Activated T-helper 1 cell treated with anti-CD3 and anti-CD28 coated beads, Interleukin-12 subunit alpha, Interleukin-12 subunit beta, Interleukin-2, Interleukin-4 antibody, amounts not matched to agents 30 ng/mL and 10 ng/mL and 1 ng/mL, durations not matched to agents 14 hours and 24 hours and 36 hours (primary cell): ENCODE measurements at regions of chr9 and their contacts with region 1.

Region 1: GRCh38 chr9:120755827-120756434 is 37.3 kb downstream of the FBXW2 start:
- DNase-seq: peak; percentile 53
- H3K4me3 Mint-ChIP-seq: no peak overlapping the region
- H3K27ac Mint-ChIP-seq: no peak overlapping the region
- H3K4me1 Mint-ChIP-seq: peaks cover 30% of the 10 kb centered on the region
- H3K27me3 Mint-ChIP-seq: no peaks in the 10 kb centered on the region

Region 2: DNA sequence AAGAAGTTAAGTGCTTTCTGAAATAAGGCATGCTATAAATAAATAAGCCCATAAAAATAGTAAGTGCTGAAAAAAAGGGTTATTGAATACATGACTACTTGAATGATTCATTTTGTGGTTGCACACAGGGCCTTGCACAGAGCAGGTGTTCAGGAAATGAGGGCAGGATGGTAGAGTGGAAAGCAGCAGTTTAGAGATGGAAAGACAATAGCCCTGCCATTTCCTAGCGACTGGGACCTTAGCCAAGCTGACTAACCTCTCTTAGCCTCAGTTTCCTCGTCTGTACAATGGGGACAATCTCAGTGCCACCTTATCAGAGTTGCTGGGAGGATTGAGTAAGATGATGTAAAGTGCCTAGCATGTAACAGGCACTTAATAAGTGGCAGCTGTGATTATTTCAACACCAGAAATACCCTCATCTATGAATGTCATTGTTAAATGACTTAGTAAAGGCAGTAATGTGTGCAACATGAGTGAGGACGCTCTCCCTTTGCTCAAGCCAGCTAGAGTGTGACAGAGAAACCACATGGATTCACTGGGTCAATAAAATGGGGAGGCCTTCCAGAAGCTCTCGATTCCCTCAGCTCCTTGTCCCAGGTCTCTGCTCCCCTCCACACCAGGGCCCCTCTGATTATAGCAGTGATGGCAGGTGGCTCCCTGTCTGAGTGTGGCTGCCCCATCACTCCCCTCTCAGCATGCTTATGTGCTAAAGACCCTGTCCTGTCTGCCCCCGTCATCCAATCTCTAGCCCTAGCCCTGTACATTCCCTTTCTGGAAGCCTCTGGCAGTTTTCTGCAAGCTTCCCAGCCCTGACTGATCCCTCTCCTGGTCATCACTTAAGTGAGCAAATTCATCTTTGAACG is 137.0 kb after region 1 on chr9:
- intact Hi-C with region 1: loop called (anchors 5 kb)
- DNase-seq: peak; percentile 62
- H3K4me3 Mint-ChIP-seq: peak overlapping the region; percentile 69
- H3K27ac Mint-ChIP-seq: peak overlapping the region; percentile 99
- H3K4me1 Mint-ChIP-seq: peaks cover 74% of the 10 kb centered on the region
- H3K27me3 Mint-ChIP-seq: no peaks in the 10 kb centered on the region

Region 3: GRCh38 chr9:120936011-120936763 is 180.3 kb after region 1 on chr9:
- intact Hi-C with region 1: loop called (anchors 1 kb)
- DNase-seq: peak; percentile 77
- H3K4me3 Mint-ChIP-seq: peak overlapping the region; percentile 59
- H3K27ac Mint-ChIP-seq: peak overlapping the region; percentile 90
- H3K4me1 Mint-ChIP-seq: peaks cover 58% of the 10 kb centered on the region
- H3K27me3 Mint-ChIP-seq: peaks cover 3% of the 10 kb centered on the region

Region 4: GRCh38 chr9:120980951-120981350 is 225.0 kb after region 1 on chr9:
- intact Hi-C with region 1: loop called (anchors 1 kb)
- DNase-seq: no peak
- H3K4me3 Mint-ChIP-seq: no peak overlapping the region
- H3K27ac Mint-ChIP-seq: no peak overlapping the region
- H3K4me1 Mint-ChIP-seq: peaks cover under 1% of the 10 kb centered on the region
- H3K27me3 Mint-ChIP-seq: peaks cover 18% of the 10 kb centered on the region

Region 5: DNA sequence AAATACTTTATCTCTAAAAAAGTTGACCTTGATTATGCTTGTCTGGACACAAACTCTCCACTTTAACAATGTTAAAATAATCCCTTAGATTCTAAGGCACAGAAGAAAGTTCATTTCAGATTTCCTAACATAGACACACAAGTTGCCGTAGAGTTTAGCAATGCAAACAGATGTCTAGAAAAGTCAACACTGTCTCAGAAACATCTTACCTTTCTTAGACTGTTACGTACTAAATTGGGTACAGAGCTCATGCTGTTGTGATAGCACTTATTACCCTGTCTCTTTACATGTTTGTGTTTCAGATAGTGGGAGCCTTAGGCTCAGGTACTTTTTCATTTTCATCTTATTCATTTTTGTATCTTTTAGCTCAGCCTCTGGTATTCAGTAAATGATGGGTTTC is 242.2 kb after region 1 on chr9:
- intact Hi-C with region 1: no loop called
- DNase-seq: no peak
- H3K4me3 Mint-ChIP-seq: no peak overlapping the region
- H3K27ac Mint-ChIP-seq: no peak overlapping the region
- H3K4me1 Mint-ChIP-seq: no peaks in the 10 kb centered on the region
- H3K27me3 Mint-ChIP-seq: peaks cover 4% of the 10 kb centered on the region

Region 6: DNA sequence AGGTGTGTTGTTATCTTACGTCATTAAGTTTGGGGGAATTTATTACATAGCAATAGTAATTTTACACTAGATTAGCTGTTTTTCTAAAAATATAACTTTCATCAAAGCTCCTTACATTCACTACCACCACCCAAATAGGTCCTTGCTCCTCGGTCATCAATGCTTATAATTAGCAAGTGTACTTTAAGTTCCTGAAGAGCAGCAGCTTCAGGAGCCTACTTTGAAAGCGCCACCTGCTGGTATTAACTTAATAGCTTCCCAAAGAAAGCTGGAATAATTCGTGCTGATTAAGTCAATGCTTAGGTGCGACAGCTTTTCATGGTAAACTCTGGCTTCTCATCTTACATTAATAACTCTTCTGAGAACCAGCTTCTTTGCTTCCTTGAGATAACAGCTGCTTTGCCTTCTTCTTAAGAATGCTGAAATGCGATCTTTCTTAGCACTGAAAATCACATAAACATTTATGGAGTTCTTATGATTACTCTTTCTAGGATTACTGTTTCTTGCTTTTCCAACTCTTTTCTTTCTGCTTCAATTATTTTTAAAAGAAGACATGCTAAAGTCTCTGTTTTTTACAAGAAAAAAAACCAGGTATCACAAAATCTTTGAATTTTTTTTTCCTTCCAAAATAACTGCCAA is 304.2 kb after region 1 on chr9:
- intact Hi-C with region 1: loop called (anchors 1 kb)
- DNase-seq: no peak
- H3K4me3 Mint-ChIP-seq: no peak overlapping the region
- H3K27ac Mint-ChIP-seq: no peak overlapping the region
- H3K4me1 Mint-ChIP-seq: peaks cover 15% of the 10 kb centered on the region
- H3K27me3 Mint-ChIP-seq: peaks cover 11% of the 10 kb centered on the region